MCF 10A (cell line): ENCODE measurements at regions of chr2 and their contacts with region 1.

Region 1: DNA sequence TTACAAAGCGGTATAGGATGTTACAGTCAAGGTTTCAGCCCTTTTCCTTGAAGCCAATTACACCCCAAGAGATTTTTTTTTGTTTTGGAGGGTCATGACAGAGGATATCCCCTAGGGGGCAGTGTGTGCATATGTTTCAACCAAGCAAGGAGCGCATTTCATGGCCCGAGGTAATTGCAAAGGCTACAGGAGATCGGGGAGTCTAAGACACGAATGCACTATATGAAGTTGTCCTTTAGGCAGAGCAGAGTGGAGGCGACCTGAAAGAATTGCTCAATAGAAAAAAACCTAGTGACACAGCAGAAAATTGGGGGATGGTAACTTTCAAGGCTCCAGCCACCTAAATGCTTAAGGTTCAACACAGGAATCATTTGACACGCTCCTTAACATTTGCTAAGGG is 219.8 kb upstream of the PARD3B start:
- DNase-seq: peak; percentile 85
- H3K4me3 Mint-ChIP-seq: no peak overlapping the region
- H3K27ac Mint-ChIP-seq: no peak overlapping the region
- H3K4me1 Mint-ChIP-seq: peaks cover 11% of the 10 kb centered on the region
- H3K27me3 Mint-ChIP-seq: no peaks in the 10 kb centered on the region
- CTCF ChIP-seq: peak; percentile 73

Region 2: DNA sequence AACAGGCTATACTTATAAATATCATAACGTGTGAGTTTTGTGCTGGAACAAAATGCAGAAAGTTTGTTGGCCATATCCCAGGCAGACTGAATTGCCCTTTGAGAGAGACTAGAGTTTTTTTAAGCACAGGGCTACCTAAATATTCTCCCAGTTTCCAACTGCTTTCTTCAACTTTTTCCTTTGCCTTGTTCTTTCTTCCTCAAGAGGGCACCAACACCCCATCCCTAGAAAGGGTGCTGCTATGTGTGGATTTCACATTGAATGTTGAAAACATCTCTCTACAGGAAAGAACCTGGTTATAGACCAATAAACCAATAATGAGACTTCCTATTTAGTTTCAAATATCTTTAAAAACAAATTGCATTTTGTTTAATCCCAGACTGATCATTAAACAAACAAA is 301.0 kb before region 1 on chr2:
- CTCF ChIA-PET with region 1: interaction called, 3 read pairs
- POLR2A ChIA-PET with region 1: no interaction called
- intact Hi-C with region 1: loop called (anchors 5 kb)
- DNase-seq: peak; percentile 64
- H3K4me3 Mint-ChIP-seq: no peak overlapping the region
- H3K27ac Mint-ChIP-seq: no peak overlapping the region
- H3K4me1 Mint-ChIP-seq: peaks cover 6% of the 10 kb centered on the region
- H3K27me3 Mint-ChIP-seq: no peaks in the 10 kb centered on the region
- CTCF ChIP-seq: peak; percentile 67

Region 3: DNA sequence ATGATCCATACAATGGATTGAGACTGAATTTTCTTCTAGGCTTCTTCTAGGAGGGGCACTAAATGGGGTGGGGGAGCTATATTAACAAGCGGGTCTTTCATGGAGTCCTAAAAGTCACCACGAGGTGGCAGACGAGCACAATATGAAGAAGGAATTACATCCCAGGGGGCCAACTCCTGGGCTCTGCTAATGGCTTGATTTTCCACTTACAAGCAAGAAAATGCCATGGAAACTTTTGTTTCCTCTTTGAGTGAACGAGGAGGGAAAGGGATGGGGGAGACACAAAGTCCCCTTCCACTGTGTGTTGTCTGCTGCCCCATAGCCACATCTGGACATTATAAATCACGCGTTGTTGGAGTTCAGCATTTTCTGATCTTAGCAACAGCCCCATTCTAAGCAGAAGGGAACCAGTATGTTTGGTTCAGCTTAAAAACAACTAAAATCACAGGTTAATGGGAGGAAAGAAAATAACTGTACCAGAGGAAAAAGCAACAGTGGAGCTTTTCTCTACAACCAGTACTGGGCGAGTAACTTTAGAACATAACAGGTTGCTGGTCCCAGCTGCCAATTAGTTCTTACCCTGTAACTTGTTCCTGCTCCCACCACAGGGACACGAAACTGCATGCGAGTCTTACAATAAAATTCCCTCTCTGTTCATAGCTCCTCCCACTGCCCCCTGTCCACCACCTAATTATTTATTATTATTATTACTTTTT is 65.1 kb before region 1 on chr2:
- CTCF ChIA-PET with region 1: interaction called, 15 read pairs
- POLR2A ChIA-PET with region 1: no interaction called
- intact Hi-C with region 1: no loop called
- DNase-seq: peak; percentile 71
- H3K4me3 Mint-ChIP-seq: no peak overlapping the region
- H3K27ac Mint-ChIP-seq: no peak overlapping the region
- H3K4me1 Mint-ChIP-seq: peaks cover 6% of the 10 kb centered on the region
- H3K27me3 Mint-ChIP-seq: no peaks in the 10 kb centered on the region
- CTCF ChIP-seq: peak; percentile 81

Region 4: GRCh38 chr2:204545023-204545860 is 219.8 kb after region 1 on chr2 and contains the start of gene PARD3B:
- CTCF ChIA-PET with region 1: interaction called, 4 read pairs
- POLR2A ChIA-PET with region 1: no interaction called
- intact Hi-C with region 1: loop called (anchors 5 kb)
- DNase-seq: peak; percentile 66
- H3K4me3 Mint-ChIP-seq: peak within 1 kb of the TSS; percentile 88
- H3K27ac Mint-ChIP-seq: peak within 1 kb of the TSS; percentile 88
- H3K4me1 Mint-ChIP-seq: peaks cover 8% of the 10 kb centered on the region
- H3K27me3 Mint-ChIP-seq: no peaks in the 10 kb centered on the region
- CTCF ChIP-seq: no peak
- total RNA-seq, gene PARD3B: 8.4 and 11.6 TPM in 2 replicates

Region 5: DNA sequence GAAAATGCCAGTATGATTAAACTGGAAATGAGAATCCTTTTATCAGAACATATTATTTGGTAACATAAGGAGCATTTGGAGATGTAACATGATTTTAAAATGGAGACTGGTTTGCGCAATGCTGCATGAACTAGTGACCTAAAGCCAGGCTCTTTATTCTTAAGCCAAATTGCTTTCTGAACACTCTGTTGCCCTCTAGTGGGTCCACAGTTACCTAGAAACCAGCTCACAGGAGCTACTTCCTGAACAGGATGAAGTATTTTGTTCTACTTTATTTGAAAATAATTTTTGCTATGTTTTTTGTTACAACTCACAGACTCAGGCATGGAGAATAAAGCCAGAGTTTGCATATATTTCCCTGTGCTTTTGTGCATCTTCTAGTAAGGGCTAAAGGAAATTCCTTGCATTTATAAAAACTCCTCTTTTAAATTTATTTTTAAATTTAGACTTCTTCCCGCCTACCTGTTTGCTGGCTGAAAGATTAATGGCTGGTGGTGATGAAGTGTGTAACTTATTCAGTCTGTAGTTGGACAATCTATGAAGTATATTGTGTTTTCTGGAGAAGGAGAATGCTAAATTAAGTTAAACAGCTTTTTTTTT is 366.5 kb after region 1 on chr2:
- CTCF ChIA-PET with region 1: interaction called, 39 read pairs
- POLR2A ChIA-PET with region 1: no interaction called
- intact Hi-C with region 1: loop called (anchors 1 kb)
- DNase-seq: peak; percentile 86
- H3K4me3 Mint-ChIP-seq: no peak overlapping the region
- H3K27ac Mint-ChIP-seq: no peak overlapping the region
- H3K4me1 Mint-ChIP-seq: peaks cover 4% of the 10 kb centered on the region
- H3K27me3 Mint-ChIP-seq: no peaks in the 10 kb centered on the region
- CTCF ChIP-seq: peak; percentile 76

Region 6: DNA sequence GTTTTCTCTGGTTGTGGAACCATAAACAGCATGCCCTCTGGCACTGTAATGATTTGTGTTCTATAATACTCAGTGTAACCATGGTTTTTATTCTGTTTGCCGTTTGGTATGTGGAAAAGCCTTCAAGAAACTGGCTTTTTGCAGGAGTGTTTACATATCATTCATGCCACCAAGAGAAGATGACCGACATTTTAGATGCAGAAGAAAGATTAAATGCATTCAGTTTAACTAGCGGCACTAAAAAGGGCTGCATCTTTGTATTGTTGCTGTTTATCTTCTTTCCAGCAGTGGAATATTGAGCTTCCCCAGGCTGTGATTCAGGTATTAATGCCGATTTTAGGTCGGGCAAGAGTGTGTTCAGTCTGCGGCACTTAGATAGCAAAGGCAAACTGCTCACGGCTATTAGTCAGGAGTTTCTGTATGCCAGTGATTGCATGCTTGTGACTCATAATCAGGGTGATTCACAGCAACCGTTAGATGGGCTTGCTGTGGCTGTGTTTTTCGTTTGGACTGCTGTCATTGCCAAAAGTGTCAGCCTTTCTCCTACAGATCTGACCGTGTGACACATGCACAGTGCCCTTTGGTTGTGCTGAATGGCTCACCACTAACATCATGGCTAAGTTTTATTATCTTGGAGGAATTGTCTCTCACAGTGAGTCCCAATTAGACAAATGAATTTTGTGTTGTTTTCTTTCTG is 699.5 kb after region 1 on chr2:
- CTCF ChIA-PET with region 1: no interaction called
- POLR2A ChIA-PET with region 1: no interaction called
- intact Hi-C with region 1: loop called (anchors 1 kb)
- DNase-seq: peak; percentile 95
- H3K4me3 Mint-ChIP-seq: peak overlapping the region; percentile 33
- H3K27ac Mint-ChIP-seq: peak overlapping the region; percentile 67
- H3K4me1 Mint-ChIP-seq: peaks cover 18% of the 10 kb centered on the region
- H3K27me3 Mint-ChIP-seq: no peaks in the 10 kb centered on the region
- CTCF ChIP-seq: no peak

Region 7: GRCh38 chr2:205947621-205948495 is 1622.4 kb after region 1 on chr2:
- CTCF ChIA-PET with region 1: interaction called, 3 read pairs
- POLR2A ChIA-PET with region 1: no interaction called
- intact Hi-C with region 1: loop called (anchors 1 kb)
- DNase-seq: peak; percentile 62
- H3K4me3 Mint-ChIP-seq: no peak overlapping the region
- H3K27ac Mint-ChIP-seq: no peak overlapping the region
- H3K4me1 Mint-ChIP-seq: peaks cover 14% of the 10 kb centered on the region
- H3K27me3 Mint-ChIP-seq: no peaks in the 10 kb centered on the region
- CTCF ChIP-seq: peak; percentile 79